CD8-positive, alpha-beta T cell (primary cell): ENCODE measurements at regions of chr6 and their contacts with region 1.

Region 1: DNA sequence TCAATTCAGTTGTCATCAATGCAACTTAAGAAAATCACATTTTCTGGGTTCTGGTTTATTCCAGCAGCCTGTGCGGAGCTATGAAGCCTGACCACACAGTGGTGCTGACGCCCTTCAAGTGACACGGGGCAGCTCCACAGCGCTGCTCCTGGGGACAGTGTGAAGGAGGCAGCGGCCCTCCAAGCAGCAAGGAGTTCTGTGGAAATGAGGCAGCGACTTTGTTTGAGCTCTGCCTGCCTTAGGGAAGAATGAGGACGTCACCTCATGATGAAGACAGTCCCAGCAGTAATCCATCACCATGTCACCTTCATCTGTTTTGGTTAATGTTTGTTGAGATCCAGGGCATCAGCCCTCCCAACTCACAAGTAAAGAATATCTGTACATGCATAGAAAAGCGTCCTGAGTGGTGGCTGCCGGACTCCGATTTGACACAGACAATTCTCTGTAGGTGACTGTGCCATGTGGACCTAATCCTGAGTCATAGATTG is 168.5 kb upstream of the UST start:
- DNase-seq: peak in 7 of 9 experiments; percentile 9 to 66 (median 37)
- ATAC-seq: peak; percentile 75
- H3K4me3 ChIP-seq: no peak overlapping the region
- H3K4me3 Mint-ChIP-seq: no peak overlapping the region
- H3K27ac ChIP-seq: no peak overlapping the region
- H3K27ac Mint-ChIP-seq: no peak overlapping the region
- H3K4me1 ChIP-seq: no peaks in the 10 kb centered on the region
- H3K4me1 Mint-ChIP-seq: no peaks in the 10 kb centered on the region
- H3K27me3 ChIP-seq: peaks cover 0 to 3% of the 10 kb centered on the region in 2 experiments
- H3K27me3 Mint-ChIP-seq: peaks cover 20% of the 10 kb centered on the region
- CTCF ChIP-seq: peak; percentile 52

Region 2: GRCh38 chr6:148611234-148611633 is 32.9 kb after region 1 on chr6:
- CTCF ChIA-PET with region 1: no interaction called
- POLR2A ChIA-PET with region 1: no interaction called
- intact Hi-C with region 1: no loop called
- DNase-seq: no peak
- ATAC-seq: no peak
- H3K4me3 ChIP-seq: no peak overlapping the region
- H3K4me3 Mint-ChIP-seq: no peak overlapping the region
- H3K27ac ChIP-seq: no peak overlapping the region
- H3K27ac Mint-ChIP-seq: no peak overlapping the region
- H3K4me1 ChIP-seq: no peaks in the 10 kb centered on the region
- H3K4me1 Mint-ChIP-seq: no peaks in the 10 kb centered on the region
- H3K27me3 ChIP-seq: peaks cover 0 to 3% of the 10 kb centered on the region in 2 experiments
- H3K27me3 Mint-ChIP-seq: peaks cover 4% of the 10 kb centered on the region
- CTCF ChIP-seq: no peak

Region 3: GRCh38 chr6:148947621-148948444 is 369.5 kb after region 1 on chr6:
- CTCF ChIA-PET with region 1: interaction called, 5 read pairs
- POLR2A ChIA-PET with region 1: no interaction called
- intact Hi-C with region 1: loop called (anchors 1 to 5 kb)
- DNase-seq: peak; percentile 56 to 86 (median 84)
- ATAC-seq: peak; percentile 94
- H3K4me3 ChIP-seq: no peak overlapping the region
- H3K4me3 Mint-ChIP-seq: no peak overlapping the region
- H3K27ac ChIP-seq: no peak overlapping the region
- H3K27ac Mint-ChIP-seq: no peak overlapping the region
- H3K4me1 ChIP-seq: no peaks in the 10 kb centered on the region
- H3K4me1 Mint-ChIP-seq: no peaks in the 10 kb centered on the region
- H3K27me3 ChIP-seq: no peaks in the 10 kb centered on the region
- H3K27me3 Mint-ChIP-seq: peaks cover 4% of the 10 kb centered on the region
- CTCF ChIP-seq: peak; percentile 74